Heart right ventricle (tissue), 16 donors: ENCODE measurements at regions of chr5 and their contacts with region 1.

Region 1: GRCh38 chr5:74766849-74767578 is at the starts of genes GFM2 and NSA2:
- DNase-seq: peak; percentile 90 to 94
- ATAC-seq: peak; percentile 99 to 100 (median 99)
- H3K4me3 ChIP-seq: peak within 1 kb of the TSS; percentile 79 to 96 (median 91)
- H3K27ac ChIP-seq: peak within 1 kb of the TSS; percentile 12 to 88 (median 78)
- H3K4me1 ChIP-seq: peaks cover 5 to 42% (median 30%) of the 10 kb centered on the region in 9 donors
- H3K27me3 ChIP-seq: no peaks in the 10 kb centered on the region
- CTCF ChIP-seq: no peak
- total RNA-seq, gene GFM2: 33.1 to 62.7 (median 49.2) TPM
- total RNA-seq, gene NSA2: 29.8 to 79.1 (median 50.5) TPM

Region 2: GRCh38 chr5:73565139-73565968 is 1201.7 kb before region 1 on chr5 and contains the starts of genes ANKRA2 and UTP15:
- intact Hi-C with region 1: loop called in 1 of 10 experiments (anchors 10 kb)
- DNase-seq: peak; percentile 99 to 100
- ATAC-seq: peak; percentile 98 to 100 (median 99)
- H3K4me3 ChIP-seq: peak within 1 kb of the TSS; percentile 51 to 92 (median 77)
- H3K27ac ChIP-seq: peak within 1 kb of the TSS; percentile 48 to 98 (median 89)
- H3K4me1 ChIP-seq: peaks cover 3 to 42% (median 39%) of the 10 kb centered on the region in 9 donors
- H3K27me3 ChIP-seq: no peaks in the 10 kb centered on the region
- CTCF ChIP-seq: no peak
- total RNA-seq, gene ANKRA2: 10.4 to 15.9 (median 12.0) TPM
- total RNA-seq, gene UTP15: 9.1 to 15.0 (median 10.6) TPM

Region 3: GRCh38 chr5:74631081-74631953 is 135.7 kb before region 1 on chr5:
- intact Hi-C with region 1: no loop called
- DNase-seq: no peak
- ATAC-seq: peak in 5 of 8 donors; percentile 41 to 70 (median 53)
- H3K4me3 ChIP-seq: no peak overlapping the region
- H3K27ac ChIP-seq: peak overlapping the region in 3 of 10 donors; percentile 1 to 79 (median 38)
- H3K4me1 ChIP-seq: peaks cover 0 to 57% (median 29%) of the 10 kb centered on the region in 9 donors
- H3K27me3 ChIP-seq: no peaks in the 10 kb centered on the region
- CTCF ChIP-seq: no peak

Region 4: GRCh38 chr5:74684900-74685851 is 81.8 kb before region 1 on chr5 and contains the start of gene HEXB:
- intact Hi-C with region 1: loop called in 2 of 10 experiments (anchors 5 to 10 kb)
- DNase-seq: peak; percentile 91 to 92
- ATAC-seq: peak; percentile 97 to 99 (median 99)
- H3K4me3 ChIP-seq: peak within 1 kb of the TSS; percentile 77 to 97 (median 92)
- H3K27ac ChIP-seq: peak within 1 kb of the TSS; percentile 79 to 95 (median 88)
- H3K4me1 ChIP-seq: peaks cover 0 to 36% (median 23%) of the 10 kb centered on the region in 9 donors
- H3K27me3 ChIP-seq: no peaks in the 10 kb centered on the region
- CTCF ChIP-seq: peak in 2 of 9 donors; percentile 2 to 14
- total RNA-seq, gene HEXB: 79.4 to 225 (median 115) TPM

Region 5: GRCh38 chr5:74895906-74896305 is 128.9 kb after region 1 on chr5:
- intact Hi-C with region 1: loop called in 3 of 10 experiments (anchors 5 to 10 kb)
- DNase-seq: peak; percentile 46 to 80
- ATAC-seq: peak; percentile 92 to 99 (median 98)
- H3K4me3 ChIP-seq: no peak overlapping the region
- H3K27ac ChIP-seq: no peak overlapping the region
- H3K4me1 ChIP-seq: peaks cover 0 to 8% (median 0%) of the 10 kb centered on the region in 9 donors
- H3K27me3 ChIP-seq: no peaks in the 10 kb centered on the region
- CTCF ChIP-seq: no peak

Region 6: DNA sequence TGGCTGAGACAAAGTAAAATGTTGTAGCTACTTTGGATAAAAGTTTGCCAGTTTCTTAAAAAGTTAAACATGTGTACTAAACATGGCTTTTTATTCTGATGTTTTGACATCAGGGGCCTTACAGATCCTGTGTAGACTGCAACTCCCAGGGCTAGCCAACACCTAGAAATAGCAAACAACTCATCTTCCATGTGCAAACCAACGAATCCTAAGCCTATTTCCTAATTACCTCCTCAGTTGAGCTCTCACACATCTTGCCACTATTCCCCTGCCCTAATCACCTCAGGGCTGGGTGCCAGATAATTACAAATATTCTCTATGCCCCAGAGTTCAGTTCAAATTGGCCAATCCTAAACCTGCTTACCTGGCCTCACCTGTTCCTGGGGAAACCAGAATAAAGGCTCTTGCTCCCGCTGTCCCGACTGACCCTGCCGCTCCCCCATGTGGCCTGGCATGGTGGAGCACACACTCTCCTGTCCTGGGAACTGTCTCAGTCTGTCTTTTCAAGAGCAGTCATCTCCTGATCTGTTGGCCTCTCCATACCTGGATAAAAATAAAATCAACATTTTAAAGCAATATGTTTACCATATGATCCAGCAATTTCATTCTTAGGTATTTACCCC is 136.3 kb after region 1 on chr5:
- intact Hi-C with region 1: loop called in 3 of 10 experiments (anchors 5 to 10 kb)
- DNase-seq: peak in 1 of 2 donors; percentile 13
- ATAC-seq: peak in 5 of 8 donors; percentile 33 to 72 (median 62)
- H3K4me3 ChIP-seq: no peak overlapping the region
- H3K27ac ChIP-seq: no peak overlapping the region
- H3K4me1 ChIP-seq: no peaks in the 10 kb centered on the region
- H3K27me3 ChIP-seq: no peaks in the 10 kb centered on the region
- CTCF ChIP-seq: peak in 7 of 9 donors; percentile 25 to 55 (median 47)

Region 7: DNA sequence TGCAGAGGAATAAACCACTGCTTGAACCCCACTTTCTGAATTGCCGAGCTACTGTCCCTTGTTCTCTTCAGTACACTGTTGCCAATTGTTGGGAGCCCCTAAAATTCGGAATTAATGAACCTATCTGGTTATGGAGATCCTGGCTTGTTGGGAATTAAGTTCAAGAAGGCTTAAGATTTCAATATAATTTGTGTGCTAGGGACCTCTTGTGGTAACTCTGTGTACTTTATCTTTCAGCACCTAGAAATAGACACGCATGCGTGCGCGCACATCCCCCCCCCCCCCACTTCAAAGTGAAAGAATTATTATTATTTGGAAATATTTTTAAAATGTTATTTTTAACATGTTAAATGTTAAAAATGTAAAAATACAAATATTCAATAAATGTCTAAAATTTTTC is 152.5 kb after region 1 on chr5:
- intact Hi-C with region 1: loop called in 9 of 10 experiments (anchors 2 to 10 kb)
- DNase-seq: no peak
- ATAC-seq: peak in 2 of 8 donors; percentile 46 to 61
- H3K4me3 ChIP-seq: no peak overlapping the region
- H3K27ac ChIP-seq: no peak overlapping the region
- H3K4me1 ChIP-seq: no peaks in the 10 kb centered on the region
- H3K27me3 ChIP-seq: peaks cover 0 to 3% (median 0%) of the 10 kb centered on the region in 7 donors
- CTCF ChIP-seq: peak; percentile 16 to 61 (median 52)

Region 8: DNA sequence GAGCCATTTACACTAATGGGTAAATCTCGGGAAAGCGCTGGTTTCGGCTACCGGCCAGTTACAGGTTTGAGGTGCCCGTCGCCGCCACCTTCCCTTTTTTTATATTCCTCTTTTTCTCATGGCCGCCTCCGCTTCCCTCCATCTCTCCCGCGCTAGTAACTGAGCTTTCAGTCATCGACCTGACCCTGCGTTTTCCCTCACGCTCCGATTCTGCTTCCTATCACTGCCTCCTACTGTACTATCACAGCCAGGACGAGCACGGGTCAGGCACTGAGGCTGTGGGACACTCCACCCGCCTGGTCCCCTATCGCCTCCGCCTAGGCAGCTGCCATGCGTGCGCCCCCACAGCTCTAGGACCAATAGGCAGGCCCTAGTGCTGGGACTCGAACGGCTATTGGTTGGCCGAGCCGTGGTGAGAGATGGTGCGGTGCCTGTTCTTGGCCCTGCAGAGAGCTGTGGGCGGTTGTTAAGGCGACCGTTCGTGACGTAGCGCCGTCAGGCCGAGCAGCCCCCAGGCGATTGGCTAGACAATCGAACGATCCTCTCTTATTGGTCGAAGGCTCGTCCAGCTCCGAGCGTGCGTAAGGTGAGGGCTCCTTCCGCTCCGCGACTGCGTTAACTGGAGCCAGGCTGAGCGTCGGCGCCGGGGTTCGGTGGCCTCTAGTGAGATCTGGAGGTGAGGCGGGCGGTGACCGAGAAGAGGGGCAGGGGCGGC is 569.8 kb after region 1 on chr5 and contains the start of gene HMGCR:
- intact Hi-C with region 1: loop called in 1 of 10 experiments (anchors 10 kb)
- DNase-seq: peak; percentile 97 to 99
- ATAC-seq: peak; percentile 99 to 100 (median 99)
- H3K4me3 ChIP-seq: peak within 1 kb of the TSS; percentile 72 to 99 (median 90)
- H3K27ac ChIP-seq: peak within 1 kb of the TSS; percentile 37 to 95 (median 90)
- H3K4me1 ChIP-seq: peaks cover 2 to 28% (median 18%) of the 10 kb centered on the region in 9 donors
- H3K27me3 ChIP-seq: no peaks in the 10 kb centered on the region
- CTCF ChIP-seq: peak in 5 of 9 donors; percentile 5 to 53 (median 41)
- total RNA-seq, gene HMGCR: 9.8 to 16.3 (median 11.4) TPM